Endothelial cell of umbilical vein (primary cell): ENCODE measurements at regions of chr1 and their contacts with region 1.

Region 1: GRCh38 chr1:19485362-19486187 is at the start of gene CAPZB:
- DNase-seq: peak; percentile 79
- H3K4me3 ChIP-seq: peak within 1 kb of the TSS; percentile 69 to 98 (median 72)
- H3K27ac ChIP-seq: peak within 1 kb of the TSS; percentile 91
- H3K4me1 ChIP-seq: peaks cover 35% of the 10 kb centered on the region
- H3K27me3 ChIP-seq: no peaks in the 10 kb centered on the region
- CTCF ChIP-seq: no peak
- POLR2A ChIP-seq: peak; percentile 62
- total RNA-seq, gene CAPZB: 339 and 347 TPM in 2 replicates

Region 2: DNA sequence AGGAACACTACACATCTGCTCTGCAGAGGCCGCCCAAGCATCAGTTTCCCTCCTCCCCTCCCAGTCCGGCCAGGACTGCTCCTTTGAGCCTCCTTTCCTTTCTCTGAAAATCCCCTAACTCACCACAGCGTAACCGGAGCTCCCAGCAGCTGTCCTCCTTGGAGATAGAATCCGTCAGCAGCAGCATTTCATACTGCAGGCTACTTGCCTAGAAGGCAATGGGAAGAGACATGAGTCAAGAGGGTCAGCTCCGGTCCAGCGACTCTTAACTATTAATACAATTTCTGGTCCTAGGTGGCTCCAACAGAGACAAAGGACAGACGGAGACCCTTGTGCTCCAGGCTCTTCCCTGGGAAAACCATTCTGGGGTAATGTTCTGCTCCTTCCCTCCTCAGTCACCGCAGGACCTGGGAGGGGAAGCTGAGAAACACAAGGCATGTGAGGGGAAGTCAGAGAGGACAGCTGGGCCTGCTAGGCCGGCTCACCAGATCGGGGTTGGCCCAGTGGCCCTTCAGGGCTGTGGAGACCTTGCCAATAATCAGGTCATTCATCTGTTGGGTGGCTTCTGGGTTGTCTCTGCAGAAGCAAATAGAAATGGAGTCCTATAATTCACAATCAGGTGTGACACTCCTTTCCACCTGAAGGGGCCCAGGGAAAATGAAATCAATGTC is 375.2 kb before region 1 on chr1:
- CTCF ChIA-PET with region 1: no interaction called
- POLR2A ChIA-PET with region 1: no interaction called
- dilution Hi-C with region 1: no loop called
- intact Hi-C with region 1: no loop called
- DNase-seq: no peak
- H3K4me3 ChIP-seq: no peak overlapping the region
- H3K27ac ChIP-seq: no peak overlapping the region
- H3K4me1 ChIP-seq: no peaks in the 10 kb centered on the region
- H3K27me3 ChIP-seq: no peaks in the 10 kb centered on the region
- CTCF ChIP-seq: no peak
- POLR2A ChIP-seq: no peak

Region 3: GRCh38 chr1:19341201-19342072 is 144.1 kb before region 1 on chr1:
- CTCF ChIA-PET with region 1: no interaction called
- POLR2A ChIA-PET with region 1: no interaction called
- dilution Hi-C with region 1: no loop called
- intact Hi-C with region 1: loop called (anchors 5 kb)
- DNase-seq: peak; percentile 72
- H3K4me3 ChIP-seq: no peak overlapping the region
- H3K27ac ChIP-seq: no peak overlapping the region
- H3K4me1 ChIP-seq: peaks cover 4% of the 10 kb centered on the region
- H3K27me3 ChIP-seq: no peaks in the 10 kb centered on the region
- CTCF ChIP-seq: peak; percentile 91 to 92
- POLR2A ChIP-seq: no peak

Region 4: GRCh38 chr1:19374083-19374801 is 111.3 kb before region 1 on chr1:
- CTCF ChIA-PET with region 1: no interaction called
- POLR2A ChIA-PET with region 1: no interaction called
- dilution Hi-C with region 1: no loop called
- intact Hi-C with region 1: no loop called
- DNase-seq: no peak
- H3K4me3 ChIP-seq: no peak overlapping the region
- H3K27ac ChIP-seq: no peak overlapping the region
- H3K4me1 ChIP-seq: no peaks in the 10 kb centered on the region
- H3K27me3 ChIP-seq: no peaks in the 10 kb centered on the region
- CTCF ChIP-seq: peak in 1 of 2 donors; percentile 45
- POLR2A ChIP-seq: no peak

Region 5: DNA sequence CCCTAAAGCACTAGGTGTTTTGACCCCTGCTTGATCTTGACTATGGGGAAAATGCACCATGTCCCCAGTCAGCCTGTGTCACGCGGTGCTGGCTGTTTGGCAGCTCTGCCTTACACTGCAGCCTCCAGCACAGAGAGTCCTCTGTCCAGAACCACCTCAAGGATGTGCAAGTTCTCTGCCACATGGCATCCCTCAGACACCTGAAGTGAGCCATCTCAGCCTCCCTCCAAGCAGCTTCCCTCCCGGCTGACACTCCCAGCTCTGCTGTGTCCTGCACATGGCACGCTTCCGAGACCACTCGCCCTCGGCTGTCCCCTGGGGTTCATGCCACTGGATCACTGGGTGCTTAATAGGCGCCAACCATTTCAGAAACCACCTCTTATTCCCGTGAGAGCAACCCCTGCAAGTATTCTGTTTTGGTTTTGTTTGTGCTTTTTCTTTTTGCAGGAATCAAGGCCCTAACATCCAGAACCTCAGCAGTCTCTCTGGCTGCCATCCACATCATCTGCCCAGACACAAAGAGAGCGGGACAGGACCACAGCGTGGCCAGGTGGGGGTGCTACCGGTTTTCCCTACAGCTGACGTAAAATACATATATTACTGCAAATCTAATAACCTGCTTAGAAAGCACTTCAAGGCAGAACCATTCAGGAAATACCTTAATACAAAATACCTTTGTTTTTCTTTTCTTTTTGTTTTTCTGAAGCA is 46.0 kb before region 1 on chr1:
- CTCF ChIA-PET with region 1: interaction called, 10 read pairs
- POLR2A ChIA-PET with region 1: interaction called, 3 read pairs
- dilution Hi-C with region 1: no loop called
- intact Hi-C with region 1: loop called (anchors 2 kb)
- DNase-seq: peak; percentile 33
- H3K4me3 ChIP-seq: no peak overlapping the region
- H3K27ac ChIP-seq: no peak overlapping the region
- H3K4me1 ChIP-seq: peaks cover 52% of the 10 kb centered on the region
- H3K27me3 ChIP-seq: no peaks in the 10 kb centered on the region
- CTCF ChIP-seq: peak in 1 of 2 donors; percentile 26
- POLR2A ChIP-seq: no peak

Region 6: GRCh38 chr1:19504796-19505692 is 19.5 kb after region 1 on chr1:
- CTCF ChIA-PET with region 1: interaction called, 15 read pairs
- POLR2A ChIA-PET with region 1: no interaction called
- dilution Hi-C with region 1: no loop called
- intact Hi-C with region 1: loop called (anchors 1 kb)
- DNase-seq: peak; percentile 86
- H3K4me3 ChIP-seq: no peak overlapping the region
- H3K27ac ChIP-seq: peak overlapping the region; percentile 61
- H3K4me1 ChIP-seq: peaks cover 26% of the 10 kb centered on the region
- H3K27me3 ChIP-seq: no peaks in the 10 kb centered on the region
- CTCF ChIP-seq: no peak
- POLR2A ChIP-seq: peak; percentile 33

Region 7: DNA sequence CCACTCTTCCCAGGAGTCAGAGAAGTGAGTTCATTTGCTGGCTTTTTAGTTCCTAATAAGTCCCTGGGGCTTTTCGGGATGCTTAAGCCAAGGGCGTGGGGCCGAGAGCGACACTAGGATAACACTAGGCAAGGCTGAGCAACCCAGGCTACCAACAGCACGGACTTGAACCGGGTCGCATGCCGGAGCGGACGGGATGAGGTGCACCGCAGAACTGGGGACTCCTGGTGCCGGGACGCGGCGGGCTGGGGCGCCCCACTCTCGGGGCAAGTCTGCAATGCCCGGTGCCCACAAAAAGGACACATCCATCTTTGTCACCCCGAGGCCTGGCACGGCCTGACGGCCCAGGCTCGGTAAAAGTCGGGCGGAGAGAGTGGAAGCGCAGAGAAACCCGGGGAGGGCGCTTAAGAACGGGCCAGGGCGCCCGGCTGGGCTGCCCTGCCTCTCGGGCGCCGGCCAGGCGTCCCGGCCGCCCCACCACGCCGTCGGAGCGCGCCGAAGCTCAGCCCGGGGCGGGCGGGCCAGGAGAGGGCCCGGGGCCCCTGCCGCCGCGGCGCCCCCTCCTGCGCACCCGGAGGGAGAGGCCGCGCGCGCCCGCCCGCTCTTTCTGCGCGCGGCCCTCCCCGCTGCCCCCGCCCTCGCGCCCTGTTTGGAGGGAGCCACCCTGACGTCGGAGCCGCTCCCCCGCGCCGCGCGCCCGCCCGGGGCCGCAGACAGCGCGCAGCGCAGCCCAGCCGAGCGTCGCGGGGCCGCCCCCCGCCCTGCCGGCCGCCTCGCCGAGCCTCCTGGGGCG is 158.2 kb after region 1 on chr1 and contains the start of gene NBL1:
- CTCF ChIA-PET with region 1: interaction called, 9 read pairs
- POLR2A ChIA-PET with region 1: no interaction called
- dilution Hi-C with region 1: no loop called
- intact Hi-C with region 1: loop called (anchors 2 kb)
- DNase-seq: peak; percentile 54
- H3K4me3 ChIP-seq: peak within 1 kb of the TSS; percentile 31 to 49 (median 31)
- H3K27ac ChIP-seq: no peak within 1 kb of the TSS
- H3K4me1 ChIP-seq: peaks cover 12% of the 10 kb centered on the region
- H3K27me3 ChIP-seq: peaks cover 0 to 1% of the 10 kb centered on the region in 2 experiments
- CTCF ChIP-seq: no peak
- POLR2A ChIP-seq: no peak
- total RNA-seq, gene NBL1: 39.8 and 40.5 TPM in 2 replicates